CD8-positive, alpha-beta T cell (primary cell): ENCODE measurements at regions of chr7 and their contacts with region 1.

Region 1: GRCh38 chr7:26200444-26201246 is at the start of gene HNRNPA2B1:
- DNase-seq: peak; percentile 96 to 100 (median 98)
- ATAC-seq: peak; percentile 75
- H3K4me3 ChIP-seq: peak within 1 kb of the TSS; percentile 75 to 95
- H3K4me3 Mint-ChIP-seq: peak within 1 kb of the TSS; percentile 100
- H3K27ac ChIP-seq: peak within 1 kb of the TSS; percentile 92 to 95
- H3K27ac Mint-ChIP-seq: peak within 1 kb of the TSS; percentile 99
- H3K4me1 ChIP-seq: peaks cover 49% of the 10 kb centered on the region
- H3K4me1 Mint-ChIP-seq: peaks cover 51% of the 10 kb centered on the region
- H3K27me3 ChIP-seq: no peaks in the 10 kb centered on the region
- H3K27me3 Mint-ChIP-seq: no peaks in the 10 kb centered on the region
- CTCF ChIP-seq: no peak
- total RNA-seq, gene HNRNPA2B1: 241 to 247 TPM

Region 2: DNA sequence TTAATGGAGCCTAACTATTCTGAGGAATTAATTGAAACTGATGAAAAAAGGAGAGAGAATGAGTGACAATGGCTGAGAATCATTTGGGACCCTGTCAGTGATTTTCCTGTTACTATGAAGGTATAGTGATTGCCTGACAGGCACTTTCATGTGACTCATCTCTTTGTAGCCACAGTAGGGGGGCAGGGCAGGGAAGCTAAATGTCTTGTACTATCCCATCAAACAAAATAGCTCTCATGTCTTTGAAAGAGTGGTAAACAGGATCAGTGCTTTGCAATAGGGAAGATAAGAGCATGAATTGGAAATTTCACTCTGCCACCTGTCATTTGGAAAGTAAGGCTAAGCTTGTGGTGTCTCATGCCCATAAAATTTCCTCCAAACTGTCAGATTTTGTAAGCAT is 1348.9 kb before region 1 on chr7:
- CTCF ChIA-PET with region 1: no interaction called
- POLR2A ChIA-PET with region 1: no interaction called
- intact Hi-C with region 1: no loop called
- DNase-seq: no peak
- ATAC-seq: no peak
- H3K4me3 ChIP-seq: no peak overlapping the region
- H3K4me3 Mint-ChIP-seq: no peak overlapping the region
- H3K27ac ChIP-seq: no peak overlapping the region
- H3K27ac Mint-ChIP-seq: no peak overlapping the region
- H3K4me1 ChIP-seq: no peaks in the 10 kb centered on the region
- H3K4me1 Mint-ChIP-seq: no peaks in the 10 kb centered on the region
- H3K27me3 ChIP-seq: no peaks in the 10 kb centered on the region
- H3K27me3 Mint-ChIP-seq: no peaks in the 10 kb centered on the region
- CTCF ChIP-seq: no peak

Region 3: GRCh38 chr7:25125137-25125946 is 1075.3 kb before region 1 on chr7 and contains the start of gene CYCS:
- CTCF ChIA-PET with region 1: no interaction called
- POLR2A ChIA-PET with region 1: interaction called, 4 read pairs
- intact Hi-C with region 1: loop called (anchors 2 kb)
- DNase-seq: peak; percentile 99 to 100 (median 99)
- ATAC-seq: peak; percentile 92
- H3K4me3 ChIP-seq: peak within 1 kb of the TSS; percentile 84 to 86
- H3K4me3 Mint-ChIP-seq: peak within 1 kb of the TSS; percentile 97
- H3K27ac ChIP-seq: peak within 1 kb of the TSS; percentile 96 to 97
- H3K27ac Mint-ChIP-seq: peak within 1 kb of the TSS; percentile 99
- H3K4me1 ChIP-seq: peaks cover 12% of the 10 kb centered on the region
- H3K4me1 Mint-ChIP-seq: peaks cover 22% of the 10 kb centered on the region
- H3K27me3 ChIP-seq: no peaks in the 10 kb centered on the region
- H3K27me3 Mint-ChIP-seq: no peaks in the 10 kb centered on the region
- CTCF ChIP-seq: no peak
- total RNA-seq, gene CYCS: 135 to 140 TPM

Region 4: DNA sequence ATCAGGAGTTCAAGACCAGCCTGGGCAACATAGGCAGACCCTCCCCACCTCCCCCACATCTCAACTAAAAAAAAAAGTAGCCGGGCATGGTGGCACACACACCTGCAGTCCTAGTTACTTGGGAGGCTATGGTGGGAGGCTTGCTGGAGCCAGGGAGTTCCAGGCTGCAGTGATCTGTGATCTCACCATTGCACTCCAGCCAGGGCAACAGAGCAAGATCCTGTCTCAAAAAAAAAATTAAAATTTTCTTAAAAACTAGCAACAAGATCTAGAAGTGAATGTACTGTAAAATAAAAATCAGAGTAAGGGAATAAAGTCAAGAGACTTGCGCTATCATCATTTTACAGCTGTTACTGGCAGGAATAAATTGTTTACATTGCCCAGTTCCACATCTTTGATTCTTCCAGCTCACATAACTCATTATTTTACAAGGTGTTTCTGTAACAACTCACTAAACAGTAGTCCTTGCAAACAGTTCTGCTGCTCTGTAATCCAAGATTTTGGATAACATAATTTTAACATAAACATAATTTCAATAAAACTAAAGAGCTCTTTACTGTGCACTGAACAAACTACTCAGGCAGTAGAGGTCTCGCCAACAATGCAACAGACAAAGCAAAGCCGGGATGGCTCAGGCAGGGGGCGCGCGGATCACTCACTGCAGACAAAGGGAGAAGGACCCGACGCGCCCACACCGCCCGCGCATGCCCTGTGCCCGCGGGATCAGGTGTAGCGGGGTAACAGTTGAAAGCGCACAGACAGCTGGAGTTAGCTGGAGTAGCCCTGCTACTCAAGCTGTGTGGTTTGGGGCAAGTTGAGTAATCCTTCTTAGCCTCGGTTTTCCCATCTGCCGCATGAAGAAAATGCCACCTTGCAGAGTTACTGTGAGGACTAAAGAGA is 122.0 kb before region 1 on chr7:
- CTCF ChIA-PET with region 1: interaction called, 29 read pairs
- POLR2A ChIA-PET with region 1: interaction called, 4 read pairs
- intact Hi-C with region 1: no loop called
- DNase-seq: peak; percentile 65 to 88 (median 81)
- ATAC-seq: peak; percentile 100
- H3K4me3 ChIP-seq: peak overlapping the region in 1 of 2 experiments; percentile 18
- H3K4me3 Mint-ChIP-seq: no peak overlapping the region
- H3K27ac ChIP-seq: no peak overlapping the region
- H3K27ac Mint-ChIP-seq: no peak overlapping the region
- H3K4me1 ChIP-seq: peaks cover 4% of the 10 kb centered on the region
- H3K4me1 Mint-ChIP-seq: peaks cover 6% of the 10 kb centered on the region
- H3K27me3 ChIP-seq: peaks cover 0 to 8% of the 10 kb centered on the region in 2 experiments
- H3K27me3 Mint-ChIP-seq: peaks cover 19% of the 10 kb centered on the region
- CTCF ChIP-seq: peak; percentile 80

Region 5: DNA sequence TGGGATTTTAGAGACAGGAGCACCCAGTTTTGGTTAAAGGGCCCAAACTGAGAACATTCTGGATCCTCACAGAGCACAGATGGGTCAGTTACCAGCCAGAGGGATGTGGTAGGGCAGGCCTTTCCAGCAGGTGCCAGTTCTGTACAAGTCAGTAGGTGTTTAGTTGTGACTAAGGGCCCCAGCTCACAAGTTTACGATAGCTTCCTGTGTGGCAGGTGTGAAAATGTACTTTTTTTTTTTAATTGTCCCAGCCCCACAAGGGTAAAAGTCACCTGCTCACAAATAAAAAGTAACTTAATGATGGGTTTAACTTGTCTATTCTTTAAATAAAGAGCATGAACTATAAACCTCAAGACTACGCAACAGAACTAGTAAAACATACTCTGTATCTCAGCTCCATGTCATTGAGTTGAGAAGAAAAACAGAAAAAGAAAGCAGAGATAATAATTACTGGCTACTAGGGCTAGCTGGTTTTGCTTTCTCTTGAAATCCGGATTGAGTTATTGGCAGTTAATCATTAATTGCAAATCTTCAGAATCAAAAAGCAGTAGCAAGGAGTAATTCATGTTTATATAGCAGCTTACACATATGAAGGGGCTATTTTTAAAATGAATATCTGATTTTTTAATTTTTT is 33.2 kb before region 1 on chr7:
- CTCF ChIA-PET with region 1: interaction called, 12 read pairs
- POLR2A ChIA-PET with region 1: interaction called, 5 read pairs
- intact Hi-C with region 1: no loop called
- DNase-seq: peak in 3 of 9 experiments; percentile 54 to 84 (median 74)
- ATAC-seq: peak; percentile 88
- H3K4me3 ChIP-seq: no peak overlapping the region
- H3K4me3 Mint-ChIP-seq: no peak overlapping the region
- H3K27ac ChIP-seq: peak overlapping the region in 1 of 2 experiments; percentile 84
- H3K27ac Mint-ChIP-seq: peak overlapping the region; percentile 87
- H3K4me1 ChIP-seq: peaks cover 14% of the 10 kb centered on the region
- H3K4me1 Mint-ChIP-seq: peaks cover 16% of the 10 kb centered on the region
- H3K27me3 ChIP-seq: no peaks in the 10 kb centered on the region
- H3K27me3 Mint-ChIP-seq: no peaks in the 10 kb centered on the region
- CTCF ChIP-seq: no peak

Region 6: GRCh38 chr7:26291699-26292538 is 91.3 kb after region 1 on chr7 and contains the start of gene SNX10:
- CTCF ChIA-PET with region 1: interaction called, 6 read pairs
- POLR2A ChIA-PET with region 1: interaction called, 28 read pairs
- intact Hi-C with region 1: loop called (anchors 1 to 2 kb)
- DNase-seq: peak; percentile 45 to 91 (median 72)
- ATAC-seq: peak; percentile 79
- H3K4me3 ChIP-seq: peak within 1 kb of the TSS; percentile 70 to 94
- H3K4me3 Mint-ChIP-seq: peak within 1 kb of the TSS; percentile 91
- H3K27ac ChIP-seq: peak within 1 kb of the TSS; percentile 43 to 78
- H3K27ac Mint-ChIP-seq: peak within 1 kb of the TSS; percentile 85
- H3K4me1 ChIP-seq: peaks cover 32% of the 10 kb centered on the region
- H3K4me1 Mint-ChIP-seq: peaks cover 38% of the 10 kb centered on the region
- H3K27me3 ChIP-seq: no peaks in the 10 kb centered on the region
- H3K27me3 Mint-ChIP-seq: no peaks in the 10 kb centered on the region
- CTCF ChIP-seq: no peak
- total RNA-seq, gene SNX10: 3.9 to 7.0 TPM

Region 7: GRCh38 chr7:27662490-27663205 is 1462.0 kb after region 1 on chr7 and contains the start of gene HIBADH:
- CTCF ChIA-PET with region 1: no interaction called
- POLR2A ChIA-PET with region 1: no interaction called
- intact Hi-C with region 1: loop called in 1 of 2 experiments (anchors 5 kb)
- DNase-seq: peak; percentile 90 to 99 (median 94)
- ATAC-seq: peak; percentile 92
- H3K4me3 ChIP-seq: peak within 1 kb of the TSS; percentile 70 to 97
- H3K4me3 Mint-ChIP-seq: peak within 1 kb of the TSS; percentile 88
- H3K27ac ChIP-seq: peak within 1 kb of the TSS; percentile 79 to 84
- H3K27ac Mint-ChIP-seq: peak within 1 kb of the TSS; percentile 94
- H3K4me1 ChIP-seq: peaks cover 20% of the 10 kb centered on the region
- H3K4me1 Mint-ChIP-seq: peaks cover 33% of the 10 kb centered on the region
- H3K27me3 ChIP-seq: no peaks in the 10 kb centered on the region
- H3K27me3 Mint-ChIP-seq: no peaks in the 10 kb centered on the region
- CTCF ChIP-seq: no peak
- total RNA-seq, gene HIBADH: 6.8 to 7.3 TPM